AG04450 (cell line): ENCODE measurements at regions of chrX and their contacts with region 1.

Region 1: GRCh38 chrX:47233337-47234113 is 716 bp downstream of the USP11 start:
- DNase-seq: peak; percentile 93
- H3K4me3 ChIP-seq: peak overlapping the region; percentile 76
- H3K27ac ChIP-seq: peak overlapping the region; percentile 98
- H3K27me3 ChIP-seq: no peaks in the 10 kb centered on the region
- CTCF ChIP-seq: no peak

Region 2: DNA sequence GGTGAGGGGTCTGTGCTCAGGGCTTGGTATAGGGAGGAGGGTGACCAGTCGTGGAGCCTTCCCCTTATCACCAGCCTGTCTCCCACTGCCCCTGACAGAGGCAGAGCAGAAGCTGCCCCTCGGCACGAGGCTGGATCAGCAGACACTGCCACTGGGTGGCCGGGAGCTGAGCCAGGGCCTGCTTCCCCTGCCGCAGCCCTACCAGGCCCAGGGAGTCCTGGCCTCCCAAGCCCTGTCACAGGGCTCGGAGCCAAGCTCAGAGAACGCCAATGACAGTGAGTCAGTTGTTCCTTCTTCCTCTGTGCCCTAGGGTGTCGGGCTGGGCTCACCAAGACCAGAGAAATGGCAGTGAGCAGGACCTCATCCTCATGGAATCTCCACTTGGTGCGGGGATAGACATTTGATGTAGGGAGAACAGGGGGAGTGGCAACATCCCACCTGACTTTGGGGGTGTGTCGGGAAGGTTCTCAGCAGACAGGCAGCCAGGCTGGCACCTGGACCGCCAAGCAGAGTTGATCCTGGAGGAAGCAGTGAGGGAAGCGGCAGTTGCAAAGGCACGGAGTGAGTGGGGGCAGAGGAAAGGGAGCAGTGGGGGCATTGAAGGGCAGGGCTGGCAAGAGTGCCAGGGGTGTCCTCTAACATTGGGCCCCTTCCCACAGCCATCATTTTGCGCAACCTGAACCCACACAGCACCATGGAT is 54.2 kb before region 1 on chrX:
- CTCF ChIA-PET with region 1: no interaction called
- POLR2A ChIA-PET with region 1: no interaction called
- DNase-seq: no peak
- H3K4me3 ChIP-seq: no peak overlapping the region
- H3K27ac ChIP-seq: no peak overlapping the region
- H3K27me3 ChIP-seq: no peaks in the 10 kb centered on the region
- CTCF ChIP-seq: no peak

Region 3: DNA sequence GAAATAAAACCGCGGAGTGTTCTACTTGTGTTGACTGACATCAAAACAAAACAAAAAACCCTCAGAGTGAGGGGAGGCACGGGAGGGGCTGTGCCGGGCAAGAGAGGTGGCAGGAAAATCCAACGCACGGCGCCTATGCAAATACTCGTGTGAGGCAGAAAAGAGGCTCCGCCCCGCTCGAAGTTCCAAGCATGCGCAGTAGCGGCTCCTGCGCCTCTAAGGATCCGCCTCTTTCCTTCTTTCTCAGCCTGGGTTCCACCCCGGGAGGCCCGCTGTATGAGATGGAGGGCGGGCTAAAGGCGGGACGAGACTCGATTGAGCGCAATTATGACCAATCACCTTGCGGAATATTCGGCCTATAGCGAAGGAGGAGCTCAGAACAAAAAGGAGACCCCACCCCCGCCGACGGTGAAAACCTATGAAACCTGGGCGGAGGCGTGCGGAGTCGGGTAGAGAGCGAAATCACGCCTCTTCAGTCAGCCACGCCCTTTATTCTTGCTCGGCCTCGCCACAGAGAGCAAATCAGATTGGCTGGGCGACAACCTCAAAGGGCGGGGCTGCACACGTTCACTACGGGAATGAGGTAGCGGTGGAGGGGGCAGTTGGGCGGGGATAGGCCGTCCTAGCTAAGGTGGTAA is 15.8 kb before region 1 on chrX:
- CTCF ChIA-PET with region 1: no interaction called
- POLR2A ChIA-PET with region 1: interaction called, 14 read pairs
- DNase-seq: peak; percentile 96
- H3K4me3 ChIP-seq: peak overlapping the region; percentile 72
- H3K27ac ChIP-seq: peak overlapping the region; percentile 92
- H3K27me3 ChIP-seq: no peaks in the 10 kb centered on the region
- CTCF ChIP-seq: no peak